ENCODE measurements at regions of chr11 and their contacts with region 1.

Region 1: DNA sequence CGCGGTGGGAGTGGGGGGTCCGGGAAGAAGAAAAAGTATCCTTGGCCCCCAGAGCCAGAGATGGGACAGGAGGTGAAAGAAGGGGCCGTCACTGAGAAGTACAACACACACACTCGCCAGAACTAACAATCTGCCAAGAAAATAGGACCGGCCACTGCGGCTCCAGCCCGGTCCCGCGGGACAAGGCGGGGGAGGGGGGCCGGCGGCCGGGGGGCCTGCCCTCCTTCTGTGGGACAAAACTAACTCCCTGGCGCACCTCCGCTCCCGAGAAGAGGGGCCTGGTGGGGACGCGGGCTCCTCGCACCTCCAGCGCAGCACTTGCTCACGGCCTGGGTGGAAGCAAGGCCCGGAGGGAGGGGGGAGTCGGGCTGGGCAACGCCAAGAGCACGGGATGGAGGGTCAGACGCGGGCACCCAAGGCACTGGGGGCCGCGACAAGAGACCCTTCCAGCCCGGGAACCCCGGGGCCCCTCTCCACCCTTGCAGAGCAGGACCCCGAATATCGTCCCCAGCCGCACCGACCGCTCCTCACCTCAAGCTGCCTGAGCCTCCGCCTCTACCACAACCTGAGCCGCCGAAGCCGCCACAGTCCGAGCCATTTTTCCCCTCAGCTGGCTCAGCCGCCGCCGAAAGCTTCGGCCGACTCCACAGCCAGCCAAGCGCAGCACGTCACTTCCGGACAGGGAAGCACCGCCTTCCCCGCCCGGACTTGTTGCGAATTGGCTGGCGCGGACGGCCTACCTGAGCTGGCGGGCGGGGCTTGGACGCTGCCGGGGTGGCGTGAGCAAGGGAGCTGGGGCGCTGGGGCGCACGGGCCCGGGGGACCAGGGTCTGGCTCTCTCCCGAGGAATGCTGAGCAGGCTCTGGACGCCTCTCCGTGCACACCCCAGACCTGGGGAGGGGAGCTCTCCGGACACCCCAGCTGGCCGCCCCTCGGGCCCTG is at the start of gene PIK3C2A:
- DNase-seq: peak; percentile 98
- ATAC-seq: peak; percentile 98
- total RNA-seq, gene PIK3C2A: 28.1 TPM

Region 2: DNA sequence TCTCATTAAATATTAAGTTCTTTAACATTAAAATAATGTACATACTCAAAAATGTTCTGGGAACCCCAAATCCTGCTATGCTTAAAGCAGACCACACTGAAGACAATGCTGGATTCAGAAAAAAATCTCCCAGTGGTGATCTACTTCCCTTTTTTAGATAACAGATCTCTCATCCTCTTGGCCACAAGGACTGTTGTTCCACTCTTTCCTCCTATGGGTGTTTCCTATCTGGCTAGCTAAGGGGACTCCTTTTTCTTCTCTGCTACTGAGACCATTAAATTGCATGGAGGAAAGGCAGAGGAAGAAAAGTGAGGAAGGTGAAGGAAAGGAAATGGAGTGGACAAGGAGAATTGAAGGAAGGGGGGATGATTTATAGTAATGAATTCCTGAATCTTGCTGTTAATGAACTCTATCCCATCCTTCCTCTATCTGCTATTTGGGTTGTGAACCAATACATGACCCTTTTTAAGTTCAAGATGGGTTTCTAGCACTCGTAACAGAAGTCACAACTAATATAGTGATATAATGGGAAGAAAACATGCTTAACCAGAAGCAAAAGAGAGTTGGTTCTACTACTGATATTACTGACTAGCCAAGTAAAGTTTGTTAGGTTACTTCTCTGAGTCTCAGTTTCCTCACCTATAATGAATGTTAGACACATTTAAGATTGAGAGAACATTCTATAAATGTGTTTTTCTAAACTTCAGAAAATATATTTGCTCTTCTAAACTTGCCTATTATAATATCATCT is 53.0 kb before region 1 on chr11:
- intact Hi-C with region 1: loop called (anchors 10 kb)
- DNase-seq: no peak
- ATAC-seq: no peak

Region 3: DNA sequence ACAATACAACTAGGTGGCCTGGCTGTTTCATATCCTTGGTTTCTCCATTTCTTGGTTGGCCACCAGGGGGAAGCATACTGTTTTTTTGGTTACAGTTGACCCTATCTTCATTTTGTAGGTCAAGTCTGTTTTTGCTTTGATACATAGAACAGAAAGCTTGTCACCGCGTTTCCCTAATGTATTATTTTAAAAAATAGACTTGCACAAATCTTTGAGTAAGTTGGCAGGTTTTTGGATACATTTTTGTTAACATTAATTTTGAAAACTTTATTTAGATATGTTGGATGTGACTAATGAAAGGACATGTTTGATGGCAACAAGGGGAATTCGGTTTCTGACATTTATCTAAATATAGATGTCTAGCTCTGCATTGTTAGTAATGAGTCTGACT is 147.0 kb after region 1 on chr11:
- intact Hi-C with region 1: no loop called
- DNase-seq: no peak
- ATAC-seq: peak; percentile 66

Measured in Right ventricle myocardium superior (tissue), 1 donor.